Activated CD4-positive, alpha-beta T cell treated with anti-CD3 and anti-CD28 coated beads, Interleukin-2, amount 10 ng/mL, durations not matched to agents 24 days and 14 days (primary cell): ENCODE measurements at regions of chr20 and their contacts with region 1.

Region 1: GRCh38 chr20:46545077-46545826 is 5.2 kb downstream of the OCSTAMP start:
- DNase-seq: peak; percentile 84
- H3K4me3 Mint-ChIP-seq: peak overlapping the region; percentile 73
- H3K27ac Mint-ChIP-seq: peak overlapping the region; percentile 95
- H3K4me1 Mint-ChIP-seq: peaks cover 23% of the 10 kb centered on the region
- H3K27me3 Mint-ChIP-seq: peaks cover 2% of the 10 kb centered on the region

Region 2: GRCh38 chr20:46512943-46513844 is 32.1 kb before region 1 on chr20 and contains the start of gene ZNF334:
- intact Hi-C with region 1: loop called (anchors 5 kb)
- DNase-seq: peak; percentile 78
- H3K4me3 Mint-ChIP-seq: peak within 1 kb of the TSS; percentile 86
- H3K27ac Mint-ChIP-seq: peak within 1 kb of the TSS; percentile 59
- H3K4me1 Mint-ChIP-seq: peaks cover 16% of the 10 kb centered on the region
- H3K27me3 Mint-ChIP-seq: peaks cover 3% of the 10 kb centered on the region
- total RNA-seq, gene ZNF334: 1.6 and 2.0 TPM in 2 replicates

Region 3: GRCh38 chr20:46523764-46524245 is 21.4 kb before region 1 on chr20:
- intact Hi-C with region 1: no loop called
- DNase-seq: peak; percentile 72
- H3K4me3 Mint-ChIP-seq: no peak overlapping the region
- H3K27ac Mint-ChIP-seq: no peak overlapping the region
- H3K4me1 Mint-ChIP-seq: no peaks in the 10 kb centered on the region
- H3K27me3 Mint-ChIP-seq: peaks cover 28% of the 10 kb centered on the region

Region 4: DNA sequence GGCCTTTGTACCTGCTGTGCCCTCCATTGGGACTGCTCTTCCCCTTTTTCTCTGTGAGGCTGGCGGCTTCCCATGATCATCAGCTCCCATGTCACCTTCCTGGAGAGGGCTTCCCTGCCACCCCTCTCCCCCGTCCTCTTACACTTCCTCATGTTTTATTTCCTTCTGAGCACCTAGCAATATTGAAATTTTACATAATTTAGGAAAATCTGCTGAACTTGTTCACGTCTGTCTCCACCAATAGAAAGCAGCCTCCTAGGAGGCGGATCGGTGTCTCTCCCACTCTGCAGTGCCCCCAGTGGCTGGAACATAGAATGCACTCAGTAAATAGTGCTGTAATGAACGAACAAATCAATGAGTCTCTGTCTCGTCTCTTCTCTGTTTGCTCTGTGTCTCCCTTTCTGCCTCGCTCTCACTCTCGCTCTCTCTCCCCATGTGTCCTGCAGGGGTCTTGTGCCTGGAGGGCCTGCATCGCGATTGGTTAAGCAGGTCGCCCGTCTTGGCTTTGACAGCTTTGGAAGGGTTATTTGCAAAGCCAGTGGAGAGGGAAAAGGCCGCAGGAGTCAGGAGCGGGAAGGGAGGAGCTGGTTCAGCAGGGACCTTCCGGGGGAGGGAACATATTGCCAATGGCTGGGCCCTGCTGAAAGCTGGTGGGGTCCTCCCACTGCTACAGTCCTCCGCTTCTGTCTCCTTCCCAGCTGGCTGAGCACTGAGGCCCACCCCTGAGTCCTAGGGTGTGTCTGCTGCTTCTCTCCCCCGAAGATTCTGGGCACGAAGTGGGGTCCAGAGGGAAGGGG is 17.3 kb after region 1 on chr20:
- intact Hi-C with region 1: loop called (anchors 1 kb)
- DNase-seq: peak; percentile 90
- H3K4me3 Mint-ChIP-seq: no peak overlapping the region
- H3K27ac Mint-ChIP-seq: no peak overlapping the region
- H3K4me1 Mint-ChIP-seq: peaks cover 32% of the 10 kb centered on the region
- H3K27me3 Mint-ChIP-seq: peaks cover 7% of the 10 kb centered on the region

Region 5: GRCh38 chr20:46647469-46647868 is 102.2 kb after region 1 on chr20:
- intact Hi-C with region 1: no loop called
- DNase-seq: no peak
- H3K4me3 Mint-ChIP-seq: no peak overlapping the region
- H3K27ac Mint-ChIP-seq: no peak overlapping the region
- H3K4me1 Mint-ChIP-seq: no peaks in the 10 kb centered on the region
- H3K27me3 Mint-ChIP-seq: peaks cover 48% of the 10 kb centered on the region

Region 6: DNA sequence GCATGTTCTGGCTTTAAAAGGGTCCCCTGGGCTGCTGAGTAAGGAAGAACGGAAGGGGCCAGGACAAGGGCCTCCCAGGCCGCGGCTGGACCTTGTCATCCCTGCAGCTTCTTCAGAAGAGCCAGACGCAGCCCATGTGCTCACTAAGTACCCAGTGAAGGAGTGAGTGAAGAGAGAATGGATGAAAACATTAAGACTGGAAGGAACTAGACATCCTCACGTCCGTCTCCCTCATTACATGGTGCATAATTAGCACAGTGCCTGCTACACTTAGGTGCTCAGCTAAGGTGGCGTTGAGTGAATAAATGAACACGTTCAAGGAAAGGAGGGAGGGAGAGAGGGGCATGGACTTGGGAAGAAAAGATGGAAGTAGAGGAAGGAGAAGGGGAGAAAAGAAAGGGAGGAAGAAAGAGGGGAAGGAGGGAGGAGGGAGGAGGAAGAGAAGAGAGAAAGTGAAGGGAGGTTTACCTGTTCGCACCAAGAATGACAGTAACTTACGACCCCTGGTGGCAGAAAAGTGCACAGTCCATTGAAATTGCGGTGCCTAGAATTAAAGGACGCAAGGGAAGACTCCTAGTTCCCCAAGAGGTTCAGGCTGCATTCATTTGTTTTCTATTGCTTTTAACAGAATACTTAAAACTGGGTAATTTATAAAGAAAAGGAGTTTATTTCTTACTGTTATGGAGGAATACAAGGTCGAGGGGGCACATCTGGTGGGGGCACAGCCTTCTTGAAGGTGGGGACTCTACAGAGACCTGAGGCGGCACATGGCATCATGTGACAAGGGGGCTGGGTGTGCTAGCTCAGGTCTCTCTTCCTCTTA is 136.0 kb after region 1 on chr20:
- intact Hi-C with region 1: loop called (anchors 1 kb)
- DNase-seq: peak; percentile 92
- H3K4me3 Mint-ChIP-seq: no peak overlapping the region
- H3K27ac Mint-ChIP-seq: no peak overlapping the region
- H3K4me1 Mint-ChIP-seq: peaks cover 24% of the 10 kb centered on the region
- H3K27me3 Mint-ChIP-seq: no peaks in the 10 kb centered on the region

Region 7: GRCh38 chr20:46994341-46994740 is 449.1 kb after region 1 on chr20:
- intact Hi-C with region 1: loop called (anchors 5 kb)
- DNase-seq: peak; percentile 93
- H3K4me3 Mint-ChIP-seq: peak overlapping the region; percentile 33
- H3K27ac Mint-ChIP-seq: peak overlapping the region; percentile 76
- H3K4me1 Mint-ChIP-seq: peaks cover 63% of the 10 kb centered on the region
- H3K27me3 Mint-ChIP-seq: no peaks in the 10 kb centered on the region